ENCODE measurements at regions of chr1 and their contacts with region 1.

Region 1: DNA sequence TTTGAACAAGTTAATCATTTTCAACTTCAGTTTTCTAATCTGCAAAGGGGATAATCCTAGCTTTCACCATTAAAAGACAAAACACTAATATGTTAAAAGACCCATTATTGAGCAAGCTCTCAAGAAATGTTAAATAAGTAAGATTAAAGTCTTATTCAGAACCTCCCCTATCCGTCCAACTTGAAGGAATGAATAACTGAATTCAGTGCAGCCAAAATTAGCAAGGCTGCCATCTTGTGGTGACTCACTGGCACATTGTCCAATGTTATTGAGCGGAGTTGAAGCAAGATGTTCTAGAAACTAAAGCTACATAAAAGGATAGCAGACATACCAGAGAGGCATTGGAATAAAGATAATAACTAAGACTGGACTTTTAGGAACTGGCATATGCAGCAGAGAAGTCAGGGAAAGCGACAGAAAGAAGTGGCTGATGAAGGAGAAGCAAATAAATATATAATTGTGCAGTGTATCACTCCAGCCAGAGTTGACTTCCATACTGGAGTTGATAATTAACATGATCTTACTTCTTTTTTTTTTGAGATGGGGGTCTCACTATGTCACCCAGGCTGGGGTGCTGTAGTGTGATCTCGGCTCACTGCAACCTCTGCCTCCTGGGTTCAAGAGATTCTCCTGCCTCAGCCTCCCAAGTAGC is 8.2 kb upstream of the CAP1 start:
- DNase-seq: peak; percentile 61
- H3K4me3 Mint-ChIP-seq: no peak overlapping the region
- H3K27ac Mint-ChIP-seq: no peak overlapping the region
- H3K4me1 Mint-ChIP-seq: peaks cover 26% of the 10 kb centered on the region
- H3K27me3 Mint-ChIP-seq: no peaks in the 10 kb centered on the region

Region 2: GRCh38 chr1:39816415-39817090 is 215.8 kb before region 1 on chr1:
- CTCF ChIA-PET with region 1: interaction called, 5 read pairs
- POLR2A ChIA-PET with region 1: no interaction called
- intact Hi-C with region 1: loop called (anchors 1 kb)
- DNase-seq: peak; percentile 73
- H3K4me3 Mint-ChIP-seq: no peak overlapping the region
- H3K27ac Mint-ChIP-seq: no peak overlapping the region
- H3K4me1 Mint-ChIP-seq: peaks cover 16% of the 10 kb centered on the region
- H3K27me3 Mint-ChIP-seq: peaks cover 7% of the 10 kb centered on the region

Region 3: DNA sequence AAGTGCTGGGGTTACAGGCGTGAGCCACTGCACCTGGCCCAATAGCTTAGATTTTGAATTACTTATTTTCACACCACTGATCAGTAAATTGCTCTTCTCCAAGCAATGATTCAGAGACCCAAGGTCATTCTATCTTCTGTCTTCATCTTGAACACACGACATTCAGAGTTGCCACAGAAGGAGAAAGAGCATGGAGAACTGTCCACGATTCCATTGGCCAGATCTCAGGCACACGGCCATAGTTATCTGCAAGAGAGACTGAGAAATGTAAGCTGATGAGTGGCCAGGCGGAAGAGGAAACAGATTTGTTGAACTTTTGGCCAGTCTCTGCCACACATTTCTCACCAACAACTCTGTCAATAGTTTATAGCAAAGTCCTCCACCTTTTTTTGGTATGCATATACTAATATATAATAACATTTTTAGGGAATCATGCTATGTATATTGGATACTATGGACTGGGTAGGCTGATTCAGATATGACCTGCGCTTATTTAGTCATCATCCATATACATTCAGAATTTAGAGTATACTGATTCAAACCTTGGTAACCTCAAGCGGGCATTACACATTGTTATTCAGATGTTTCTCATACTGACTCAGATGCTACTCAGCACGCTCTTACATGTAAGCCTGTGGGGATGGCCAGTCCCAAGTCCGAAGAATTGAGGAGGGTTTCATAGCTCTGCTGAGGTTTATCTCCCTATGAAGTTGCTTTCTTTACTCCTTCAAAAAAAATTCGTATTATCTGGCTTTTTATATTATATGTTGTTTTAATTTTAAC is 17.4 kb before region 1 on chr1:
- CTCF ChIA-PET with region 1: interaction called, 16 read pairs
- POLR2A ChIA-PET with region 1: interaction called, 3 read pairs
- intact Hi-C with region 1: no loop called
- DNase-seq: peak; percentile 38
- H3K4me3 Mint-ChIP-seq: no peak overlapping the region
- H3K27ac Mint-ChIP-seq: no peak overlapping the region
- H3K4me1 Mint-ChIP-seq: peaks cover 22% of the 10 kb centered on the region
- H3K27me3 Mint-ChIP-seq: no peaks in the 10 kb centered on the region

Measured in activated CD4-positive, alpha-beta memory T cell treated with anti-CD3 and anti-CD28 coated beads for 36 hours (primary cell).